ENCODE measurements at regions of chr12 and their contacts with region 1.

Region 1: DNA sequence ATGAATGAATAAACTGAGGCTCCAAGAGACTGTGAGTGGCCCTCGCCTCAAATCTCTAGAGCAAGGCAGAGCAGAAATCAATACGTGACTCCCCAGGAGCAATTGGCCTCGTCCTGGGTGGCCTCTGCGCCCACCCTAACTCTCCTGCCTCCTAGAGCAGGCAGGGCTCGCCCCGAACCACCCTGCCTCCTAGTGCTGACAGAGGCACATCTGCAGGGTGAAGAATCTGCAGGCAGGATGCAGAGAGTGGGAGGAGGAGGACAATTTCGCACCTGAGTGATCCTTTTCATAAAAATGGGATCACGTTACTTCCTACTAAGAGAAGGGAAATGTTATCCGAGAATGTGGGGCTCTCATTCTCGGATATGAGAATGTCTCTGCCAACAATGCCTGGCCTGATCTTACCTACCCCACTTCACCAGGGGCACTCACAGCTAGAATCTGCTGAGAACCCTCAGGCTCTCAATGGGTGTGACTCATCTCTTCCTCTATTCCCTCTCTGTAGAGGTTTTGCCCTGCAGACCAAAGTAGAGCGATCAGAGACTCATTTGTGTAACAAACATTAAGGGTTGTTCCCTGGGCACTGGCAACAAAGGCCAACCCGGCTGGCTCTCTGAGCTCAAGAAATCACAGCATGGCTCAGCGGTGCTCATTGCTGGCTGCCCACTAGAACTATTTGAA is 61.7 kb upstream of the BCL2L14 start:
- DNase-seq: peak; percentile 84
- ATAC-seq: peak; percentile 64
- H3K4me3 Mint-ChIP-seq: peak overlapping the region; percentile 71
- H3K27ac Mint-ChIP-seq: peak overlapping the region; percentile 96
- H3K4me1 Mint-ChIP-seq: peaks cover 77% of the 10 kb centered on the region
- H3K27me3 Mint-ChIP-seq: no peaks in the 10 kb centered on the region

Region 2: DNA sequence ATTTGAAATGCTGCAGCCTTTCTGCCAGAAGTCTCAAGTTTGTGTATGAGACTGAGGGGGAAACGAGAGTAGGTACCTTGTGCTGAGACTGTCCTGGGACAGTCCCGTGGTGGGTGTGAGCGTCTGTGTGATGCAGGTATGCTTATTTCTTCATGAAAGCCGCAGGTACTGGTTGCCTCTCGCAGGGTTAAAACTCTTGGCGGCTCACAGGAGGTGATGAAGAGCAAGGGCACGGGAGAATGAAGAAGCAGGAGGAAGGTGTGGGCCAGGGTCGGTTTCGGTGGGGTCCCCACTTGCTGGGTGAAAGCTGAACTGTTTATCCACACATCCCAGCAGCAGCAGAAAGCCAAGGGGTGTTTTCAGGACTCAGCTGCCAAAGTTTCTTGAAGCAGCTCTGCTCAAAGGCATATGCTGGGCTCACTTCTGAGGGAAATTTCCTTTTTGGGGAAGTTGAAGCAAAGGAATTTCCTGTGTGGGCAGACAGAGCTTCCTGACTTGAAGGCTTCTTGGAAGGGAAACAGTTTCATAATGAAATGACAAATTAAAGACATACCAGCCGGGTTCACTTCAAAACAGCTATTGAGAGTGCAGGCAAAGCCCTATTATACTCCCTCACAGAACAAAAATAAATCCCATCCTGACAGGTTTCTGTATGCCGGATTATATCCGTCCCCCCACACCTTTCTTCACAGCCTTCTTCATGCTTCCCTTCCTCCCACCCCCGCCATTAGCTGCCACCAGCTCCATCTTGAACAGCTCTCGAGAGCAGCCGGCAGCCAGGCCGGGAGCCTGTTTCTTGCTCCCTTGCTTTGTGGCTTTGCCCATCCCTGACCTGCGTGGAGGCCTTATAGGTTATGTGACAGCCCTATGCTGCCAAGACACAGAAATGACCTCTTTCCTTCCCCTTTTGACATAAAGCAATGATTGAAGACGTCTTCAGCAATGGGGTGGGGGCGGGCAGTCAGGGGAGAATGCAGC is 243.0 kb before region 1 on chr12:
- CTCF ChIA-PET with region 1: interaction called, 6 read pairs
- POLR2A ChIA-PET with region 1: interaction called, 19 read pairs
- intact Hi-C with region 1: loop called (anchors 1 to 2 kb)
- DNase-seq: peak; percentile 90
- ATAC-seq: peak; percentile 89
- H3K4me3 Mint-ChIP-seq: peak overlapping the region; percentile 32
- H3K27ac Mint-ChIP-seq: peak overlapping the region; percentile 84
- H3K4me1 Mint-ChIP-seq: peaks cover 100% of the 10 kb centered on the region
- H3K27me3 Mint-ChIP-seq: no peaks in the 10 kb centered on the region

Region 3: GRCh38 chr12:11862798-11863197 is 146.3 kb before region 1 on chr12:
- CTCF ChIA-PET with region 1: no interaction called
- POLR2A ChIA-PET with region 1: no interaction called
- intact Hi-C with region 1: no loop called
- DNase-seq: no peak
- ATAC-seq: peak; percentile 38
- H3K4me3 Mint-ChIP-seq: no peak overlapping the region
- H3K27ac Mint-ChIP-seq: peak overlapping the region; percentile 38
- H3K4me1 Mint-ChIP-seq: peaks cover 54% of the 10 kb centered on the region
- H3K27me3 Mint-ChIP-seq: no peaks in the 10 kb centered on the region

Region 4: DNA sequence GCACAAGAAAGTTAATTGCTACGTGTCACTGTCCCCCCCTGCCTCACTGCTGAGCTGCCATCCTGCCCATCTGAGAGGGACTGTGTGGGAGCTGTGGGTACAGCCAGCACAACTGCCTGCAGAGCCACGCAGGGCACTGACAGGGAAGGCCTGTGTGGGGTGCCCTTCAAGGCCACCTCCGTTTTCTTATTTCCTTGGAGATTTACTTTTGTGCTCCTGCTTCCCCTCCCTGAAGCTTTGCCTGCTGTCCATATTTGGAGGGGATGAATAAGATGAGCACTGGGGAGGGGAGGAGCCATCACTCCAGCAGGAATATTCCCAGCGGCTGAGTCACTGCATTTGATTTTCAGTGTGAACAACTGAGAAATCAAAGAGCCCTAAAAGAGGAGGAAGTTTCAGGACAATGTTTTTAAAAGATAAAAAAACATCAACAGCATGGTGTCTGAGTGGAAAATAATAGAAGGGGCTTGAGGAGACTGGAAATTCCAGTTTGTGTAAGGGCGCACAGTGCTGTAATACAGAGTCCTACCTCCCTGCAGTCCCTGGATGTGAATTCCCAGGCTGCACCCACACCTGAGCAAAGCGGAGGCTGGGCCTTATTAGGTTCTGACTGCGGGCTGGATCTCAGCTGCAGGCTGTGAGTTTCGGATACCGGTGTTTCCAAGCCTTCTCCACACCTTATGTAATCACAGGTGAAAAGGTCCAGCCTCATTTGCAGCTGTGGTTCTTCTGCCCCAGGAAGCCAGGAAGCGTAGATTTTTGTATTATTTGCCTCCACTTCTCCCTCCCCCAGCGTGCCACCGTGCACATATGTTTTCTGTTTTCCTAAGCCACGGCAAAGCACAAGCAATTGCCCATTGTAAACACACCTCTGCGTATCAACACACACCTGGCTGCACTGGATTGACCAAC is 130.9 kb before region 1 on chr12:
- CTCF ChIA-PET with region 1: no interaction called
- POLR2A ChIA-PET with region 1: no interaction called
- intact Hi-C with region 1: loop called (anchors 1 to 2 kb)
- DNase-seq: peak; percentile 32
- ATAC-seq: peak; percentile 28
- H3K4me3 Mint-ChIP-seq: no peak overlapping the region
- H3K27ac Mint-ChIP-seq: peak overlapping the region; percentile 73
- H3K4me1 Mint-ChIP-seq: peaks cover 52% of the 10 kb centered on the region
- H3K27me3 Mint-ChIP-seq: no peaks in the 10 kb centered on the region

Region 5: GRCh38 chr12:11987901-11988300 is 21.2 kb before region 1 on chr12:
- CTCF ChIA-PET with region 1: interaction called, 14 read pairs
- POLR2A ChIA-PET with region 1: interaction called, 3 read pairs
- intact Hi-C with region 1: loop called in 1 of 2 experiments (anchors 1 kb)
- DNase-seq: no peak
- ATAC-seq: no peak
- H3K4me3 Mint-ChIP-seq: no peak overlapping the region
- H3K27ac Mint-ChIP-seq: no peak overlapping the region
- H3K4me1 Mint-ChIP-seq: peaks cover 14% of the 10 kb centered on the region
- H3K27me3 Mint-ChIP-seq: no peaks in the 10 kb centered on the region

Region 6: GRCh38 chr12:12534166-12534866 is 525.2 kb after region 1 on chr12:
- CTCF ChIA-PET with region 1: no interaction called
- POLR2A ChIA-PET with region 1: no interaction called
- intact Hi-C with region 1: no loop called
- DNase-seq: no peak
- ATAC-seq: peak; percentile 76
- H3K4me3 Mint-ChIP-seq: no peak overlapping the region
- H3K27ac Mint-ChIP-seq: peak overlapping the region; percentile 61
- H3K4me1 Mint-ChIP-seq: peaks cover 38% of the 10 kb centered on the region
- H3K27me3 Mint-ChIP-seq: no peaks in the 10 kb centered on the region

Region 7: DNA sequence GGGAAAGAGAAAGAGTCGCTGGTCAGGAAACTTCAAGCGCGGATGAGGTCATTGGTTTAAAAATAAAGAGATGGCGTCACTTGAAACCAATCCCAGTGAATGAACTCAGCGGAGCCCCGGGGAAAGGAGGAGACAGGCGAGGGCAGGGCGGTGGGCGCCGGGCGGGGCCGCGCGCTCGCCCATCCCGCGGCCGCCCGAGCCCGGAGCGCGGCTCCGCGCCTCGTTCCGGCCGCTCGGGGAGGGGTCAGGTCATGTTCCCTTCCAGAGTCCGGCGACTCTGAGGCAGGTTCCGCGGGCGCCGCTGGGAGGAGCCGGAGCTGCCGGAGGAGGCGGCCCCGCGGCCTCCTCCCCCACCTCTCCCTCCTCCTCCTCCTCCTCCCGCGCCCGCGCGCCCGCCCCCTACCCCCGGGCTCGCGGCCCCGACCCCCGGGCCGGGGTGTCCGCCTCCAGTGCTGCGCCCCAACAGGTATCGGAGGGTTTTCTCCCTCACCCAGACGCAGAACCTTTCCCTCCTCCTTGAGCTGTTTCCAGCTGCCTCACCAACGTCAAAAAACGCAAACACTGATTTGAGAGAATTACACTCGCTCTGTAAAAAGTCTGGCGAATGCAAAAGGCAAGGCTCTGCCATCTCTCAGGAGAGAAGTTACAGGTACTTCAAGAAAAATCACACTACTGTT is 553.7 kb after region 1 on chr12 and contains the start of gene DUSP16:
- CTCF ChIA-PET with region 1: no interaction called
- POLR2A ChIA-PET with region 1: no interaction called
- intact Hi-C with region 1: loop called in 1 of 2 experiments (anchors 5 kb)
- DNase-seq: peak; percentile 82
- ATAC-seq: peak; percentile 76
- H3K4me3 Mint-ChIP-seq: peak within 1 kb of the TSS; percentile 84
- H3K27ac Mint-ChIP-seq: peak within 1 kb of the TSS; percentile 88
- H3K4me1 Mint-ChIP-seq: peaks cover 37% of the 10 kb centered on the region
- H3K27me3 Mint-ChIP-seq: no peaks in the 10 kb centered on the region
- total RNA-seq, gene DUSP16: 39.3 to 40.4 TPM